ENCODE measurements at regions of chr14 and their contacts with region 1.

Region 1: GRCh38 chr14:58072288-58073071 is 79.5 kb downstream of the ARMH4 start:
- DNase-seq: peak in 4 of 5 donors; percentile 38 to 53 (median 45)
- ATAC-seq: peak; percentile 51 to 78 (median 68)
- H3K4me3 ChIP-seq: peak overlapping the region in 8 of 12 donors; percentile 18 to 50 (median 35)
- H3K27ac ChIP-seq: no peak overlapping the region
- H3K4me1 ChIP-seq: peaks cover 0 to 6% (median 0%) of the 10 kb centered on the region in 12 donors
- H3K27me3 ChIP-seq: no peaks in the 10 kb centered on the region
- CTCF ChIP-seq: peak; percentile 60 to 82 (median 76)
- POLR2A ChIP-seq: no peak

Region 2: DNA sequence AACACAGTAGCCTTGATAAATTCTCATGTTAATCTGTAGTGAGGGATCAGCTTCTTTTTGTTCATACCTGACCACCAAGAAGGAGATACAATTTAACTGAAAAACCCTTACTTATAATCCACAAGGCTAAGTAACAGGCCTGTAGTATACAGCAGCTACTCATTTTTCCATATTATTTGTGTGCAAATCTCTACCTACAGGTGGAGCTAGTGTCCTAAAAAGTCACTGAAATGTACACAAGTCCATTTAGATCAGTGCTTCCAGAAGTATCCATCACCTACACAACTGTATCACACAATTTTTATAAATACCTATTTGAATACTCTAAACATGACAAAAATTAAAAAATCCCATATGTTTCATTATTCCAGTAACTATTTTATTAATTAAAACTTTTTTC is 379.8 kb before region 1 on chr14:
- intact Hi-C with region 1: loop called in 4 of 10 experiments (anchors 2 to 10 kb)
- DNase-seq: no peak
- ATAC-seq: no peak
- H3K4me3 ChIP-seq: no peak overlapping the region
- H3K27ac ChIP-seq: no peak overlapping the region
- H3K4me1 ChIP-seq: no peaks in the 10 kb centered on the region
- H3K27me3 ChIP-seq: no peaks in the 10 kb centered on the region
- CTCF ChIP-seq: peak in 11 of 12 donors; percentile 11 to 47 (median 30)
- POLR2A ChIP-seq: no peak

Region 3: GRCh38 chr14:58213176-58213575 is 140.7 kb after region 1 on chr14:
- intact Hi-C with region 1: no loop called
- DNase-seq: no peak
- ATAC-seq: no peak
- H3K4me3 ChIP-seq: no peak overlapping the region
- H3K27ac ChIP-seq: no peak overlapping the region
- H3K4me1 ChIP-seq: no peaks in the 10 kb centered on the region
- H3K27me3 ChIP-seq: no peaks in the 10 kb centered on the region
- CTCF ChIP-seq: no peak
- POLR2A ChIP-seq: no peak